ENCODE measurements at regions of chr5 and their contacts with region 1.

Region 1: DNA sequence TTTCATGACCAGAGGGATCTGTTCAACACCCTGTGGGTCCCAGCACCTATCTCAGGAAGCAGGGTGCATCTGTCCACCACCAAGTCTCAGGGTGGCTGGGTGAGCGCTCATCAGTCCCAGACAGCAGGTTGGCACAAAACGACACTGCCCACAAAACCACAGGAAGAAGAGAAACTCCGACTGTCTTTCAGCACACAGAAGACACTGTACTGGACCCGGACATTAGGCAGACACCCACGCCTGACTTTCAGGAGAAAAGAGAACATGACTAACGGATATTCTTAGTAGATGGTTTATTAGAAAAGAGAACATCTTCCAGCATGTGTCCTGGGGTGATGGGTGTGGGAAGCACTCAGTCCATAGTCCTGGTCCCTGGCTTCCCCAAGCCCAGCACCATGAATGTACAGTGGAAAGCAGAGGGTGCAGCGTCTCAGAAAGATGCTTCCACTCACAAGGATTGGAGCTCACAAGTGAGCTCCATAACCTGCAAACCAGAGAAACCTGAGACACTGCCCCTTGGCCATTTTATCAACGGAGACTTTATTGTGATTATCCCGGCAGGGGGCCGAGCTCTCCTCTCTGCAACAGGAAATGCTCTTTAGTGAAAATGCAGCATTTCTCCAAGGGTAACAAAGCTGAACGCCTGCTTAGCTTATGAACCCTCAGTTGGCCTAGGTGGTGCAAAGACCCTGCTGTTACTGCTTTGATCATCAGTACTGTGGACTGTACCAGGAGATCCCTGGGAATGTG is 35.8 kb upstream of the LCP2 start:
- DNase-seq: no peak
- ATAC-seq: no peak
- H3K4me3 ChIP-seq: no peak overlapping the region
- H3K27ac ChIP-seq: no peak overlapping the region
- H3K4me1 ChIP-seq: peaks cover 0 to 3% of the 10 kb centered on the region in 2 donors
- H3K27me3 ChIP-seq: no peaks in the 10 kb centered on the region
- CTCF ChIP-seq: no peak
- POLR2A ChIP-seq: no peak

Region 2: DNA sequence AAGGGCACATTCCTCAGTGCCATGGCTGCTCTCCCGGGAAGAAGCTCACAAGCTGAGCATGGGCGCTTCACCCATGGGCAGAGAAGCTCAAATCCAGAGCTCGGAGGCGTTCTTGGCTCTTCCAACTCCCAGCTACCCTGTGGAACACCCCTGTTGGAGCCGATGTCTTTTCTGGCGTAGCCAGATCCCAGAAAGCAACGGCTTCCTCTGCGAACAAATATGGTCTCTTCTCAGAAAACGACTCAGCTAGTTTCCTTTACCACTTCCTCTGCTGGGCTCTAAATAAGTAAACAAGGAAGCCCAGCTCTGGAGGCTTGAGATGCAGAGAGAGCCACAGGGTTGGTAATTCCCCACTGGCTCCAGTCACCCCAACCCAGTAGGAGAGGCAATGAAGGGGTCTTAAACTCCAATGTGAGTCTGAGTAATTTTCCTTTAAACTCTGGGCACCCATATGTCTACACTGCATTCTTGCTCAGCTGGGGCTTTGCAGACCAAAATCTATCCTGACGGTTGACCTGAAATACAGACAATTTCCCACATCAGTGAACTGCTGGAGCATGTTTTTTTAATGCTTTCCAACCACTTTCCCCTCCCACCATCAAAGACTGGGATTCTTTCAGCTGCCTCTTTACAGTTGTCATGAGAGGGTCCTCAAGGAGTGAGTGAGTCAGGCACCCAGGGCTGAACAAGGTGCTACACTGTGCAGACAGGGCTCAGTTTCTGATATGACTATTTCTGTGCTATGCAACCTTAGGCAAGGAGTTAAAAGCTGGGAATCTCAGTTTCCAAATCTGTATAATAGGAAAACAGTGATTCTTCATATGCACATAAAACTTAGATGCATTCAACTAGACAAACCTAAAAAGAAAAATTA is 35.5 kb before region 1 on chr5 and contains the start of gene LCP2:
- in situ Hi-C with region 1: no loop called
- intact Hi-C with region 1: loop called (anchors 5 kb)
- DNase-seq: no peak
- ATAC-seq: peak; percentile 51 to 55
- H3K4me3 ChIP-seq: peak within 1 kb of the TSS; percentile 8 to 57 (median 43)
- H3K27ac ChIP-seq: peak within 1 kb of the TSS; percentile 54 to 79 (median 65)
- H3K4me1 ChIP-seq: peaks cover 0 to 3% of the 10 kb centered on the region in 2 donors
- H3K27me3 ChIP-seq: no peaks in the 10 kb centered on the region
- CTCF ChIP-seq: no peak
- POLR2A ChIP-seq: peak; percentile 23 to 38
- total RNA-seq, gene LCP2: 1.9 to 3.2 (median 2.3) TPM

Measured in gastrocnemius medialis (tissue), 4 donors.